PC-9 (cell line): ENCODE measurements at regions of chr4 and their contacts with region 1.

Region 1: GRCh38 chr4:98995183-98996055 is at the start of gene METAP1:
- DNase-seq: peak; percentile 88 to 92
- H3K4me3 ChIP-seq: peak within 1 kb of the TSS; percentile 65
- H3K27ac ChIP-seq: peak within 1 kb of the TSS; percentile 55
- H3K4me1 ChIP-seq: peaks cover 28% of the 10 kb centered on the region
- H3K27me3 ChIP-seq: no peaks in the 10 kb centered on the region
- CTCF ChIP-seq: peak; percentile 55
- total RNA-seq, gene METAP1: 36.7 and 42.0 TPM in 2 replicates

Region 2: GRCh38 chr4:98143001-98143899 is 852.2 kb before region 1 on chr4 and contains the start of gene STPG2:
- CTCF ChIA-PET with region 1: no interaction called
- POLR2A ChIA-PET with region 1: interaction called, 9 read pairs
- intact Hi-C with region 1: loop called (anchors 10 kb)
- DNase-seq: peak; percentile 83 to 90
- H3K4me3 ChIP-seq: peak within 1 kb of the TSS; percentile 63
- H3K27ac ChIP-seq: peak within 1 kb of the TSS; percentile 89
- H3K4me1 ChIP-seq: peaks cover 21% of the 10 kb centered on the region
- H3K27me3 ChIP-seq: no peaks in the 10 kb centered on the region
- CTCF ChIP-seq: peak; percentile 79
- total RNA-seq, gene STPG2: 0.35 TPM in 1 of 2 replicates, not detected in the other

Region 3: GRCh38 chr4:98421111-98421510 is 574.3 kb before region 1 on chr4:
- CTCF ChIA-PET with region 1: no interaction called
- POLR2A ChIA-PET with region 1: no interaction called
- intact Hi-C with region 1: no loop called
- DNase-seq: no peak
- H3K4me3 ChIP-seq: no peak overlapping the region
- H3K27ac ChIP-seq: no peak overlapping the region
- H3K4me1 ChIP-seq: no peaks in the 10 kb centered on the region
- H3K27me3 ChIP-seq: no peaks in the 10 kb centered on the region
- CTCF ChIP-seq: no peak

Region 4: DNA sequence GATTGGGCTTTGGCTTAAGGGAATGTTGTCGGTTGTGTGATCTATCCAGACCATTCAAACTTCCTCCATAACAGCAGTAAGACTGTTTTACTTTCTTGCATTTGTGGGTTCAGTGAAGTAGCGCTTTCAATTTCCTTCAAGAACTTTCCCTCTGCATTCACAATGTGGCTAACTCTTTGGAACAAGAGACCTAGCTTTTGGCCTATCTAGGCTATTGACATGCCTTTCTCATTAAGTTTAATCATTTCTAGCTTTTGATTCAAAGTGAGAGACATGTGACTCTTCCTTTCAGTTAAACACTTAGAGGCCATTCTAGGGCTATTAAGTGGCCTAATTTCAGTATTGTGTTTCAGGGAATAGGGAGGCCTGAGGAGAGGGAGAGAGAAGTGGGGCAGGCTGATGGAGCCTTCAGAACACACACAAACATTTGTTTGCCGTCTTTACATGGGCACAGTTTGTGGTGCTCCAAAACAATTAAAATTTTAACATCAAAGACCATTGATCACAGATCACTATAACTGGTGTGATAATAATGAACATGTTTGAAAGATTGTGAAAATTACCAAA is 59.1 kb after region 1 on chr4:
- CTCF ChIA-PET with region 1: interaction called, 3 read pairs
- POLR2A ChIA-PET with region 1: no interaction called
- intact Hi-C with region 1: loop called (anchors 5 kb)
- DNase-seq: no peak
- H3K4me3 ChIP-seq: no peak overlapping the region
- H3K27ac ChIP-seq: no peak overlapping the region
- H3K4me1 ChIP-seq: peaks cover 9% of the 10 kb centered on the region
- H3K27me3 ChIP-seq: no peaks in the 10 kb centered on the region
- CTCF ChIP-seq: no peak

Region 5: GRCh38 chr4:99062120-99062519 is 66.7 kb after region 1 on chr4:
- CTCF ChIA-PET with region 1: no interaction called
- POLR2A ChIA-PET with region 1: interaction called, 15 read pairs
- intact Hi-C with region 1: loop called (anchors 5 kb)
- DNase-seq: no peak
- H3K4me3 ChIP-seq: no peak overlapping the region
- H3K27ac ChIP-seq: no peak overlapping the region
- H3K4me1 ChIP-seq: peaks cover 23% of the 10 kb centered on the region
- H3K27me3 ChIP-seq: no peaks in the 10 kb centered on the region
- CTCF ChIP-seq: no peak

Region 6: GRCh38 chr4:99088481-99089365 is 93.3 kb after region 1 on chr4 and contains the start of gene ADH5:
- CTCF ChIA-PET with region 1: no interaction called
- POLR2A ChIA-PET with region 1: no interaction called
- intact Hi-C with region 1: no loop called
- DNase-seq: peak; percentile 65 to 66
- H3K4me3 ChIP-seq: peak within 1 kb of the TSS; percentile 99
- H3K27ac ChIP-seq: peak within 1 kb of the TSS; percentile 71
- H3K4me1 ChIP-seq: peaks cover 17% of the 10 kb centered on the region
- H3K27me3 ChIP-seq: no peaks in the 10 kb centered on the region
- CTCF ChIP-seq: no peak
- total RNA-seq, gene ADH5: 76.9 and 94.7 TPM in 2 replicates

Region 7: DNA sequence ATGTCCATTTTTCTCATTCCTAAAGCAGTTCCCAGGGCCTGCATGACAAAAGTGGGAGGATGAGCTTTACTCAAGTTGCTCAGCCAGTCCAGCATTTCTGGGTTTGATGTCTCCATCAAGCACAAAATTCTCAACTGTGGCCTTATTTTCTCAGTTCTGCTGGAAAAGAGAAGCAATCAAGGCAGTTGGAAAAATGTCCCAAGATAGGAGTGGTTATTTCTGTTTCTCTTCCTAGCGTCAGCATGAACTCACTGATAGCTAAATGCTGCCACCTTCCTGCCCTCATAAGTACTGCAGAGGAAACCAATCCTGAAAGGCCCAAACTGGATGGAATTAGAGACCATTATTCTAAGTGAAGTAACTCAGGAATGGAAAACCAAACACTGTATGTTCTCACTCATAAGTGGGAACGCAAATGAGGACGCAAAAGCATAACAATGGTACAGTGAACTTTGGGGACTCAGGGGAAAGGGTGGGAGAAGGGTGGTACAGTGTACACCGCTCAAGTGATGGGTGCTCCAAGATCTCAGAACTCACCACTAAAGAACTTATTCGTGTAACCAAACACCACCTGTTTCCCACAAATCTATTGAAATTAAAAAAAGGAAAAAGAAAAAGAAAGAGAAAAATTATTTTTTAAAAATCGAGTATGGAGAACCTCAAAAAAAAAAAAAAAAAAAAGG is 410.2 kb after region 1 on chr4:
- CTCF ChIA-PET with region 1: no interaction called
- POLR2A ChIA-PET with region 1: no interaction called
- intact Hi-C with region 1: loop called (anchors 1 kb)
- DNase-seq: peak; percentile 51 to 54
- H3K4me3 ChIP-seq: no peak overlapping the region
- H3K27ac ChIP-seq: 0 out of 2 replicates have a peak overlapping the region, but pooled peaks have one; percentile 21
- H3K4me1 ChIP-seq: peaks cover 12% of the 10 kb centered on the region
- H3K27me3 ChIP-seq: no peaks in the 10 kb centered on the region
- CTCF ChIP-seq: peak; percentile 93